PC-9 (cell line): ENCODE measurements at regions of chr2 and their contacts with region 1.

Region 1: GRCh38 chr2:238256594-238257104 is 16.8 kb upstream of the HES6 start:
- DNase-seq: peak; percentile 84 to 96
- H3K4me3 ChIP-seq: no peak overlapping the region
- H3K27ac ChIP-seq: no peak overlapping the region
- H3K4me1 ChIP-seq: 0 out of 2 replicates have a peak, but pooled peaks cover 5% of the 10 kb centered on the region
- H3K27me3 ChIP-seq: no peaks in the 10 kb centered on the region
- CTCF ChIP-seq: peak; percentile 99

Region 2: DNA sequence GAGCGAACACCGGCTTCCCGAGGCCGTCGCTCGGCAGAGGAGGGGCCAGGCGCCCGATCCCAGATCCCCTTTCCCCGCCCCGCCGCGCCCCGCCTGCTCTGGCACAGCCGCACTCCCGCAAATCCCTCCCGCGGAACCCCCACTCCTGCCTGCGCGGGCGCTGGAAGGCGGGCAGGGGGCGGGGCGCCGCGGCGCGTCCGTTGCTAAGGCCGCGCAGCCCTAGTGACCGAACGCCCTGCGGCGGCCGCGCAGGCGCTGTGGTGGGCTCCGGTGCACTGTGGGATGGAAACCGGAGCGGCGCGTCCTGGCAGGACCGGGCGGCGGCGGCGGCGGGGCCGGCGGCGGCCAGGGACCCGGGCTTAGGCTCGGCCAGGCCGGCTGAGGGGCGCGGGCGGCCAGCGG is 63.6 kb after region 1 on chr2 and contains the start of gene TRAF3IP1:
- CTCF ChIA-PET with region 1: no interaction called
- POLR2A ChIA-PET with region 1: no interaction called
- intact Hi-C with region 1: loop called (anchors 1 kb)
- DNase-seq: peak; percentile 86 to 100
- H3K4me3 ChIP-seq: peak within 1 kb of the TSS; percentile 61
- H3K27ac ChIP-seq: no peak within 1 kb of the TSS
- H3K4me1 ChIP-seq: peaks cover 19% of the 10 kb centered on the region
- H3K27me3 ChIP-seq: no peaks in the 10 kb centered on the region
- CTCF ChIP-seq: no peak
- total RNA-seq, gene TRAF3IP1: 50.2 and 51.7 TPM in 2 replicates

Region 3: GRCh38 chr2:238339395-238340213 is 83.0 kb after region 1 on chr2:
- CTCF ChIA-PET with region 1: interaction called, 3 read pairs
- POLR2A ChIA-PET with region 1: interaction called, 5 read pairs
- intact Hi-C with region 1: loop called (anchors 5 kb)
- DNase-seq: peak in 1 of 2 experiments; percentile 33
- H3K4me3 ChIP-seq: no peak overlapping the region
- H3K27ac ChIP-seq: no peak overlapping the region
- H3K4me1 ChIP-seq: no peaks in the 10 kb centered on the region
- H3K27me3 ChIP-seq: no peaks in the 10 kb centered on the region
- CTCF ChIP-seq: peak; percentile 23; the same call in 1 of the 2 replicates

Region 4: GRCh38 chr2:238811759-238812158 is 555.1 kb after region 1 on chr2:
- CTCF ChIA-PET with region 1: interaction called, 22 read pairs
- POLR2A ChIA-PET with region 1: no interaction called
- intact Hi-C with region 1: no loop called
- DNase-seq: no peak
- H3K4me3 ChIP-seq: no peak overlapping the region
- H3K27ac ChIP-seq: no peak overlapping the region
- H3K4me1 ChIP-seq: no peaks in the 10 kb centered on the region
- H3K27me3 ChIP-seq: peaks cover 91% of the 10 kb centered on the region
- CTCF ChIP-seq: no peak